Thyroid gland (tissue), 4 donors: ENCODE measurements at regions of chr1 and their contacts with region 1.

Region 1: GRCh38 chr1:179365320-179366092 is at the start of gene AXDND1:
- DNase-seq: peak; percentile 85 to 86
- H3K4me3 ChIP-seq: peak within 1 kb of the TSS; percentile 58 to 84 (median 68)
- H3K27ac ChIP-seq: peak within 1 kb of the TSS; percentile 76 to 98 (median 90)
- H3K4me1 ChIP-seq: peaks cover 0 to 8% of the 10 kb centered on the region in 2 donors
- H3K27me3 ChIP-seq: no peaks in the 10 kb centered on the region
- CTCF ChIP-seq: no peak
- POLR2A ChIP-seq: peak in 1 of 2 donors; percentile 57
- total RNA-seq, gene AXDND1: 0.27 to 4.0 (median 2.1) TPM

Region 2: DNA sequence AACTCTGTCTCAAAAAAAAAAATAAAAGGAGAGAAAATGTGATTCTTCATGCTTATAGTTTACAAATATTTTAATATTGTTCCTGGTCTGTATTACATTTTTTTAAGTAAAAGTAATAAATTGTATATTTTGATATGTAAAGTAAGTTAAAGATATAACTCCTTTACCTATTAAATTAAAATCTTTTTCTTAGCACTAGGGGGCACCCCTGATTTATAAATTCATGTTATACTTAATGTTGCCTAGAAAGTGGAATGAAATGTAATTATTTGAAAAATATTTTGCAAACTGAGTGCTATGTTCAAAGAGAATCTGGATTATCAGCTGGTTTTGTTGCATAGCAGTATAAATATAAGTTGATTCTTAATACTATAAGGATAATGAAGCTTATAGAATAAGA is 591.2 kb before region 1 on chr1:
- intact Hi-C with region 1: loop called (anchors 10 kb)
- DNase-seq: no peak
- H3K4me3 ChIP-seq: no peak overlapping the region
- H3K27ac ChIP-seq: no peak overlapping the region
- H3K4me1 ChIP-seq: peaks cover 0 to 5% of the 10 kb centered on the region in 2 donors
- H3K27me3 ChIP-seq: no peaks in the 10 kb centered on the region
- CTCF ChIP-seq: peak in 5 of 6 experiments; percentile 29 to 67 (median 51)
- POLR2A ChIP-seq: no peak

Region 3: DNA sequence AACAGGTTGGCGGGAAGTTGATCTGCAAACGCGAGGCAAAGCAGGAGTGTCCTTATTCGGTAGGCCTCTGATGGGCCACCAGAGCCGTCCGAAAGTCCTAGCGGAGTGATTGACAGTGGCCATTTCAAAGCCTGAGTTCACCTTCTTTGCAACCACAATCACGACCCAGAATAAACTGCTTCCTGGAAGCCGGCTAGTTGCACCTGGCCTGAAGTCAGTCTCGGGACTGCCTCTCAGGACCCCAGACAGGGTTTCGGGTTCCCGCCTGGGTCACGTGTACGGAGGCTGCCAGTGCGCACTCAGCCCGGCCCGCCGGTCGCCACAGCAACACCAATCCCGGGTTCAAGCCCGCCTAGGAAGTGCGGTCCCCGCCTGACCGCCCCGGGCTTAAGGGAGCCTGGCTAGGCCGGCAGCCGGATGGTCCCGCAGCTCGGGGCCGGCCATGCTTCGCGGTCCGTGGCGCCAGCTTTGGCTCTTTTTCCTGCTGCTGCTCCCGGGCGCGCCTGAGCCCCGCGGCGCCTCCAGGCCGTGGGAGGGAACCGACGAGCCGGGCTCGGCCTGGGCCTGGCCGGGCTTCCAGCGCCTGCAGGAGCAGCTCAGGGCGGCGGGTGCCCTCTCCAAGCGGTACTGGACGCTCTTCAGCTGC is 283.7 kb before region 1 on chr1 and contains the start of gene TOR3A:
- intact Hi-C with region 1: loop called (anchors 5 kb)
- DNase-seq: peak; percentile 97
- H3K4me3 ChIP-seq: peak within 1 kb of the TSS; percentile 58 to 99 (median 84)
- H3K27ac ChIP-seq: peak within 1 kb of the TSS; percentile 76 to 83 (median 80)
- H3K4me1 ChIP-seq: peaks cover 13 to 15% of the 10 kb centered on the region in 2 donors
- H3K27me3 ChIP-seq: no peaks in the 10 kb centered on the region
- CTCF ChIP-seq: no peak
- POLR2A ChIP-seq: peak in 1 of 2 donors; percentile 91
- total RNA-seq, gene TOR3A: 30.0 to 57.4 (median 45.2) TPM